Psoas muscle (tissue), 8 donors: ENCODE measurements at regions of chr2 and their contacts with region 1.

Region 1: DNA sequence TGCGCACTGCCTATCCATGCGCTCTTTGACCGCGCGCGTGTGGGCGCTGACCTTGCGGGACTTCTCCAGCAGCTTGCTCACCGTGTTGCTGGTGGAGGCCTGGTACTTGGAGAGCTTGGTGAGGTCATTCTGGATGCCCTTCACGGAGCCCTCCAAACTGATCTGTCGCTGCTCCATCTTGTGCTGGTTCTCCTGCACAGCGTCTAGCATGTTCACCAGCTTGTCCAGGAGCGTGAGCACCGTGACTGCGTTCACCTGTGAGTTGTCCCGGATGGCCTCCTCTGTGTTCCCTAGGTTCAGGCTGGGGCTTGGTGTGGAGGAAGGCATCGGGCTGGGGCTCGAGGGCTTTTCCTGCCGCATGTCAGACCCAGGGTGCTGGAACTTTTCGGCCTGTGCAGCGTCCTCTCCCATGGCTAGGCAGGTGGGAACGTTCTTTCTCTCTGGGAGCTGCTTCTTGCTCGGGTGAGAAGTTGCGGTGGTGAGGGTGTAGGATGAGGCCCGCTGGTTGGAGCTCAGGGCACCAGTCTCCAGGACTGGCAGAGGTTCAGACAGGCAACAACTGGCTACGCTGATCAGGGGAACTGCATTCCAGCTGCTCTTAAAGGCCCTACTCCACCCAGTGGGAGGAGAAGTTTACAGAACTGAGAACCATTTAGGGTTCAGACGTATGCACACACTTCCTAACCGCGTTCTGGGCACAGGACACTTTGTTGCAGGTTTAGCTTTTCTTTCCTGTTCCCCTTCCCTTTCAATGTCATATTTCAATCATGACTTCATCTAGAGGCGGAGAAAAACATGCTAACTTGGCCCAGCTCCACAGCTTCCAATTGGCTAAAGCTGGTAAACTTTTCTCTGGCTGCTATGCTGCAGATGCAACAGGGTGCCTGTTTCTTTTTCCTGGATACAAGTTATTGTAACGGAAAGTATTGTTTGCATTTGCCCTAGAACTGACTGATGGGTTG is at the start of gene CAVIN2:
- DNase-seq: peak; percentile 42 to 64
- ATAC-seq: peak in 3 of 4 donors; percentile 76 to 80 (median 77)
- H3K4me3 ChIP-seq: peak within 1 kb of the TSS; percentile 66
- H3K27ac ChIP-seq: peak within 1 kb of the TSS; percentile 56
- H3K4me1 ChIP-seq: peaks cover 8% of the 10 kb centered on the region
- H3K27me3 ChIP-seq: no peaks in the 10 kb centered on the region
- CTCF ChIP-seq: no peak
- total RNA-seq, gene CAVIN2: 16.8 to 38.7 (median 23.9) TPM

Region 2: GRCh38 chr2:191995285-191995684 is 148.5 kb after region 1 on chr2:
- intact Hi-C with region 1: loop called in 1 of 2 experiments (anchors 10 kb)
- DNase-seq: no peak
- ATAC-seq: no peak
- H3K4me3 ChIP-seq: no peak overlapping the region
- H3K27ac ChIP-seq: no peak overlapping the region
- H3K4me1 ChIP-seq: no peaks in the 10 kb centered on the region
- H3K27me3 ChIP-seq: no peaks in the 10 kb centered on the region
- CTCF ChIP-seq: no peak

Region 3: DNA sequence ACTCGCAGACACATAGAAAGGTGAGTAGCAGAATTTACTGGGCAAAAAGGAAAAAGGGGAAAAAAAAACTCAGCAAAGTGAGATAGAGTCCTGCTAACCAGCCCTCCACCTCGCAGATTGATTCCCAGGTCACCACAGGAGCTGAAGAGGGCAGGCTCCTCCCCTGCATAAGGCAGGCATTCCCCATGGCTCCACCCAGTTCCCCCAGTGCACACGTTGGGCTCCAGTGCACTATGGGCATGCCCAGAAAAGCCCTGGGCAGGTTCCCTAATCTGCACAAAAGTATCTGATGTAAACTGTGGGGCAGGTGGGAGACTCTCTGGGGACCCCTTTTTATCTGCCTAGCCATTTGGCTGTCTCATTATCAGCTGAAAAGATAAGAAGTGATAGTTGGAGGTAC is 809.1 kb after region 1 on chr2:
- intact Hi-C with region 1: no loop called
- DNase-seq: no peak
- ATAC-seq: no peak
- H3K4me3 ChIP-seq: no peak overlapping the region
- H3K27ac ChIP-seq: no peak overlapping the region
- H3K4me1 ChIP-seq: no peaks in the 10 kb centered on the region
- H3K27me3 ChIP-seq: no peaks in the 10 kb centered on the region
- CTCF ChIP-seq: no peak